Ascending aorta (tissue), 2 donors: ENCODE measurements at regions of chr3 and their contacts with region 1.

Region 1: DNA sequence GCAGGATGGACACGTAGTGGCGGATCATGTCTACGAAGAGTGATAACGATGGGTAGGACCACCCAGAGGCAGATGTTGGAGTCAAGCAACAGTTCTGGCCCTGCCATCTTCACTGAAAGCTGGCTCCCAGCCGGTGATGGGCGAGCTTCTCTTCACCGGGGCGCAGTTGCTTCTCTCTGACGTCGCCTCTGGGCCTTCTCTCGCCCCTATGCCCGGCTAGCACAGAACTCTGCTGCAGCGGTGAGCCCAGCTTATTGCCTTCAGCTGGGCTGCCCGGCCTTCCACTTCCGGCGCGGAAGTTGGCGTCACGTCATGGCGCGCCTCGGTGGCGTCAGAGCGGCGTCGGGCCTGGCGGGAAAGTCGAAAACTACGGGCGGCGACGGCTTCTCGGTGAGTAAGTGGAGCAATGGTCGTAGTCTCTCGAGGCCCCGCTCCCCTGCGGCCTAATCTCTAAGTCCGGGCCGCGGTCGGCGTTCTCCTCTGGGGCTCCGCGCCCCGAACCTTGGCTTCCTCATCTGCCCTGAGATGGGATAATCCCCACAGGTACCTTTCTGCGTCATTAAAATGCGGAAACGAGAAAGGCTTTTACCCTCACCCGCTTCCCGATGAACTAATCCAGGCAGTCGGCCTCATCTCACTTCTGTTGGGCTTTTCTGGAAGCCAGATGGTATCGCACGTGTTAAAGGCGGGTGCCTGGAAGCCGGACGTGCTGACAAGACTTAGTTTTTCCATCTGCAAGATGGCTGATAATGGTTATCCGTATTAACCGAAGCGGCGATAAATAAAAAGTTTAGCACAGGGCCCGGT is at the start of gene FANCD2:
- DNase-seq: peak; percentile 56 to 93
- H3K4me3 ChIP-seq: peak within 1 kb of the TSS; percentile 72 to 83
- H3K27ac ChIP-seq: peak within 1 kb of the TSS; percentile 59 to 62
- H3K4me1 ChIP-seq: peaks cover 7 to 22% of the 10 kb centered on the region in 2 donors
- H3K27me3 ChIP-seq: no peaks in the 10 kb centered on the region
- CTCF ChIP-seq: no peak
- total RNA-seq, gene FANCD2: 54.6 TPM

Region 2: DNA sequence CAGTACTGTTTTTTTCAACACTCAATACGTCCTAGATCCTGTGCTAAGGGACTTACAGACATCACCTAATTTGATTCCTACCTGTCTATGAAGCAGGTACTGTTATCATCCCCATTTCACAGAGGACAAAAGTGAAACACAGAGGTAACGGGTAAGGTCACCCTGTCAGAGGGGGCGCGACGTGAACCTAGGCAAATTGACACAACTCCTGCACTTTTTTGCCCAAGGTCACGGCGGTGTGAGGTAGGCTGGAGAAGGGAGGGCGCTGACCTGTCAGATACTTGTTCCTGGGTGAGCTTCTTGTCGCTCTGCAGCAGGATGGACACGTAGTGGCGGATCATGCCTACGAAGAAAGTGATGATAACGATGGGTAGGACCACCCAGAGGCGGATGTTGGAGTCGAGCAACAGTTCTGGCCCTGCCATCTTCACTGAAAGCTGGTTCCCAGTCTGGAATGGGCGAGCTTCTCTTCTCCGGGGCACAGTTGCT is 40.0 kb before region 1 on chr3:
- intact Hi-C with region 1: loop called (anchors 2 kb)
- DNase-seq: no peak
- H3K4me3 ChIP-seq: peak overlapping the region; percentile 79 to 86
- H3K27ac ChIP-seq: peak overlapping the region; percentile 72 to 76
- H3K4me1 ChIP-seq: peaks cover 5 to 17% of the 10 kb centered on the region in 2 donors
- H3K27me3 ChIP-seq: no peaks in the 10 kb centered on the region
- CTCF ChIP-seq: no peak

Region 3: GRCh38 chr3:10041034-10041433 is 14.7 kb after region 1 on chr3:
- intact Hi-C with region 1: no loop called
- DNase-seq: no peak
- H3K4me3 ChIP-seq: no peak overlapping the region
- H3K27ac ChIP-seq: no peak overlapping the region
- H3K4me1 ChIP-seq: no peaks in the 10 kb centered on the region
- H3K27me3 ChIP-seq: no peaks in the 10 kb centered on the region
- CTCF ChIP-seq: no peak

Region 4: DNA sequence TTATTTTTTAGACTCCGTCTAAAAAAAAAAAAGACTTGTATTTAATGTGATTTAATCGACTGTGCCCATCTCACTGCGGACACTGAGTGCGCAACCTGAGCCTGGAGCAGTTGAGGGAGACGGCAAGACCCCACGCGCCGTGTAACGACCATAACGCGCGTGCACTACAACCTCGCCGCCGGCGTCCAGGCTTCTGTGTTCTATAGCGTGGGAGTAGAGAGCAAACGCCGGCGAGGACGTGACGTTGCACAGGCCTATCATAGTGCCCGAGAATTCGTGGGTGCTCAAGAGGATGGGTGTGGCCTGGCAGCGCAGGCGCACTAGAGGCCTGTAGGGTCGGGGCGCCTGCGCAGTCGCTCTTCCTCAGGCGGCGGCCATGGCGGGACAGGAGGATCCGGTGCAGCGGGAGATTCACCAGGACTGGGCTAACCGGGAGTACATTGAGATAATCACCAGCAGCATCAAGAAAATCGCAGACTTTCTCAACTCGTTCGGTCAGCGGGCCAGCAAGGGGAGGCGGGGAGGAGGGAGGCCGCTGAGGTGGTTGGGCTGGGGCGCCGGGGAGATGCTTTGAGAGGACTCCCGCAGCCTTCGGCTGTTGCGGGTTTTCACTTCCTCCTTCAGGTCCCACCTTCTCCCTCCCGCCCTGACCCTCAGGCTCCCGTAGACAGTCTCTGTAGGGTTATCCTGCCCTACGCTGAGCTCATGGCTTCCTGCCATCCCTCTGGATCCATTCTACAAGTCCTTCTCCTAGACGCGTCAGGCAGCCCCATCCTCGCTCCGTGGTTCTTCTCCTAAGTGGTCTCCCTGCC is 89.2 kb after region 1 on chr3 and contains the start of gene BRK1:
- intact Hi-C with region 1: loop called (anchors 2 kb)
- DNase-seq: peak; percentile 87 to 98
- H3K4me3 ChIP-seq: peak within 1 kb of the TSS; percentile 75 to 76
- H3K27ac ChIP-seq: peak within 1 kb of the TSS; percentile 55 to 74
- H3K4me1 ChIP-seq: peaks cover 6 to 11% of the 10 kb centered on the region in 2 donors
- H3K27me3 ChIP-seq: no peaks in the 10 kb centered on the region
- CTCF ChIP-seq: no peak
- total RNA-seq, gene BRK1: 87.3 TPM

Region 5: DNA sequence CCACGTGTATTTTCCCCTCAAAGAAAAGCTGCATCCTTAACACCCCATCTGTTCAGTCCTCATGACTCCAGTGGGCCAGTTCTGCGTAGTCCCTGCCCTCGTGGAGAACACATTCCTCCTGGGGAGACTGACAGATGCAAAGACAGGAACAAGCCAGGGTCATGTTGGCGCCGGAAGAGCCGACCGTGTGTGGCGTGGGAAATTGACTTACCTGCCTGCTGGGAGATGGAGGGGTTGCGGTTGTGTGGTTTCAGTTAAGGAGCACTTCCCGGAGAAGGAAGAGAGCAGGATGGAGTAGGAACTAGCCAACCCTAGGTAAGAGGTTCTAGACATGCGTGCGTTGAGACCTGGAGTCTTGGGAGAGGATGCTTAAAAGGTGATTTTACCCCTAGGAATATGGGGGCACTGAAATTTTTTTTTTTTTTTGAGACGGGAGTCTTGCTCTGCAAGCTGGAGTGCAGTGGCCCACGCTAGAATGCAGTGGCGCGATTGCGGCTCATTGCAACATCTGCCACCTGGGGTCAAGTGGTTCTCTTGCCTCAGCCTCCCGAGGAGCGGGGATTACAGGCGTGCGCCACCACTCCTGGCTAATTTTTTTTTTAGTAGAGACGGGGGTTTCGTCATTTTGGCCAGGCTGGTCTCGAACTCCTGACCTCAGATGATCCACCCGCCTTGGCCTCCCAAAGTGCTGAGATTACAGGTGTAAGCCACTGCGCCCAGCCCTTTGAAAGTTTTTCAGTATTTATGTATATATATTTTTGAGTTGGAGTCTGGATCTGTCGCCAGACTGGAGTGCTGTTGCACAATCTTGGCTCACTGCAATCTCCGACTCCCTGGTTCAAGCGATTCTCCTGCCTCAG is 116.7 kb after region 1 on chr3:
- intact Hi-C with region 1: no loop called
- DNase-seq: no peak
- H3K4me3 ChIP-seq: peak overlapping the region; percentile 65 to 91
- H3K27ac ChIP-seq: peak overlapping the region; percentile 90 to 96
- H3K4me1 ChIP-seq: peaks cover 7 to 22% of the 10 kb centered on the region in 2 donors
- H3K27me3 ChIP-seq: no peaks in the 10 kb centered on the region
- CTCF ChIP-seq: no peak

Region 6: DNA sequence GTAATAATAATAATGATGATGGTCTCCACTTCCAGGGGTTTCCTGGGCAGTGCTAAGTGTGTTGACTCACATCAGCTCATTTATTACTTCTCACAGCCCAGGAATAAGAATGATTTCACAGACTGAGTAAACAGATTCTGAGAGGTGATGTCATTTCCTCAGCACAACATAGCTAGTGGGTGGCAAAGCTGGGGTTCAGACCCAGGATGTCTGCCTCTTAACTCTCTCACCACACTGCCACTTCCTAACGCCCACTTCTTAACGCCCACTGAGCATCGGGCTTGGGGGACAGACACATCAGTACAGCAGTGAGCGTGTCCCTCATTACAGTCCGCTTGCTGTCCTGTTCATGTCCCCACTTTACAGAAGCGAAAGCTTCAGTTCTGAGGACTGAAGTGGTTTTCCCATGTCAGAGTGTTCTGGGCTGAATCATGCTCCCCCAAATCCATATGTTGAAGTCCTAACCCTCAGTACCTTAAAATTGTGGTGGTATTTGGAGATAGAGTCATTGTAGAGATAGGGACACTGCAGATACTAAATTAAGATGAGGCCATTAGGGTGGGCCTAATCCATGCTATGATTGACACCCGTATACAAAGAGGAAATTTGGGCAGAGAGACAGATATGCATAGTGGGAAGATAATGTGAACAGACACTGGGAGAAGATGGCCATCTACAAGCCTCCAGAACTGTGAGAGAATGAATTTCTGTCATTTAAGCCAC is 411.1 kb after region 1 on chr3:
- intact Hi-C with region 1: no loop called
- DNase-seq: no peak
- H3K4me3 ChIP-seq: no peak overlapping the region
- H3K27ac ChIP-seq: no peak overlapping the region
- H3K4me1 ChIP-seq: no peaks in the 10 kb centered on the region
- H3K27me3 ChIP-seq: no peaks in the 10 kb centered on the region
- CTCF ChIP-seq: no peak